Ovary (tissue), 10 donors: ENCODE measurements at regions of chr1 and their contacts with region 1.

Region 1: GRCh38 chr1:11735854-11736745 is at the start of gene AGTRAP:
- DNase-seq: peak; percentile 96 to 99 (median 98)
- H3K4me3 ChIP-seq: peak within 1 kb of the TSS; percentile 69
- H3K27ac ChIP-seq: peak within 1 kb of the TSS; percentile 61 to 86
- H3K4me1 ChIP-seq: peaks cover 12% of the 10 kb centered on the region
- H3K27me3 ChIP-seq: no peaks in the 10 kb centered on the region
- CTCF ChIP-seq: peak in 2 of 3 donors; percentile 15 to 34
- EP300 ChIP-seq: no peak
- POLR2A ChIP-seq: peak; percentile 59
- total RNA-seq, gene AGTRAP: 24.5 to 53.2 (median 31.1) TPM

Region 2: GRCh38 chr1:11661103-11661502 is 75.0 kb before region 1 on chr1:
- intact Hi-C with region 1: loop called in 1 of 4 experiments (anchors 5 kb)
- DNase-seq: no peak
- H3K4me3 ChIP-seq: no peak overlapping the region
- H3K27ac ChIP-seq: no peak overlapping the region
- H3K4me1 ChIP-seq: no peaks in the 10 kb centered on the region
- H3K27me3 ChIP-seq: no peaks in the 10 kb centered on the region
- CTCF ChIP-seq: no peak
- EP300 ChIP-seq: no peak
- POLR2A ChIP-seq: no peak

Region 3: GRCh38 chr1:11784993-11785769 is 49.1 kb after region 1 on chr1:
- intact Hi-C with region 1: loop called in 2 of 4 experiments (anchors 5 to 10 kb)
- DNase-seq: peak; percentile 71 to 85 (median 81)
- H3K4me3 ChIP-seq: peak overlapping the region; percentile 22
- H3K27ac ChIP-seq: peak overlapping the region; percentile 50 to 98
- H3K4me1 ChIP-seq: peaks cover 26% of the 10 kb centered on the region
- H3K27me3 ChIP-seq: no peaks in the 10 kb centered on the region
- CTCF ChIP-seq: peak; percentile 50 to 89 (median 87)
- EP300 ChIP-seq: no peak
- POLR2A ChIP-seq: no peak

Region 4: GRCh38 chr1:11790880-11791715 is 55.0 kb after region 1 on chr1:
- intact Hi-C with region 1: loop called in 2 of 4 experiments (anchors 5 to 10 kb)
- DNase-seq: peak; percentile 93 to 97 (median 94)
- H3K4me3 ChIP-seq: no peak overlapping the region
- H3K27ac ChIP-seq: peak overlapping the region; percentile 56 to 98
- H3K4me1 ChIP-seq: peaks cover 30% of the 10 kb centered on the region
- H3K27me3 ChIP-seq: no peaks in the 10 kb centered on the region
- CTCF ChIP-seq: no peak
- EP300 ChIP-seq: peak; percentile 100
- POLR2A ChIP-seq: peak; percentile 44

Region 5: GRCh38 chr1:12100071-12100470 is 364.0 kb after region 1 on chr1:
- intact Hi-C with region 1: no loop called
- DNase-seq: no peak
- H3K4me3 ChIP-seq: no peak overlapping the region
- H3K27ac ChIP-seq: no peak overlapping the region
- H3K4me1 ChIP-seq: no peaks in the 10 kb centered on the region
- H3K27me3 ChIP-seq: no peaks in the 10 kb centered on the region
- CTCF ChIP-seq: no peak
- EP300 ChIP-seq: no peak
- POLR2A ChIP-seq: no peak